Naive thymus-derived CD4-positive, alpha-beta T cell (primary cell): ENCODE measurements at regions of chr12 and their contacts with region 1.

Region 1: GRCh38 chr12:46585854-46586621 is 213.5 kb upstream of the SLC38A2 start:
- DNase-seq: peak in 7 of 9 donors; percentile 33 to 81 (median 71)
- ATAC-seq: peak; percentile 27
- H3K4me3 ChIP-seq: peak overlapping the region; percentile 46
- H3K4me3 Mint-ChIP-seq: peak overlapping the region; percentile 13 to 82 (median 68)
- H3K27ac ChIP-seq: no peak overlapping the region
- H3K27ac Mint-ChIP-seq: peak overlapping the region; percentile 6 to 95 (median 91)
- H3K4me1 ChIP-seq: peaks cover 5 to 21% of the 10 kb centered on the region in 2 donors
- H3K4me1 Mint-ChIP-seq: peaks cover 29 to 79% (median 74%) of the 10 kb centered on the region in 7 donors
- H3K27me3 ChIP-seq: no peaks in the 10 kb centered on the region
- H3K27me3 Mint-ChIP-seq: no peaks in the 10 kb centered on the region

Region 2: DNA sequence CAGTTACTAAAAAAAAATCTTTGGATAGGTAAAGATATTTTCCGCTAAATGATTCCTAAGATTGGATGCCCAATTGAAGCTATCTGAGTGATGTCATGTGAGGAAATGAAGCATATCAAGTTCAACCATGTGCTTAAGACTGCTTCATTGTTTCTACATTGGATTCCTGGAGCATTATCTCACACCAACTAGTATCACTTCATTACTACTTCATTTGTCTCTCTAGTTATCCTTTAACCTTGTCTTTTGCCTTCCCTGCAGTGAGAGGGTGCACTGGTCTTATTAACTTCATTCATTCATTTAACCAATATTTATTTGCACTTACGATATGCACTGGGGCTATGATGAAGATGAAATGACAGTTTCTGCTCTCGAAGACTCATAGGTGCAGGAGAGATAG is 41.6 kb after region 1 on chr12:
- CTCF ChIA-PET with region 1: no interaction called
- POLR2A ChIA-PET with region 1: no interaction called
- intact Hi-C with region 1: loop called in 1 of 2 experiments (anchors 5 kb)
- DNase-seq: no peak
- ATAC-seq: no peak
- H3K4me3 ChIP-seq: no peak overlapping the region
- H3K4me3 Mint-ChIP-seq: no peak overlapping the region
- H3K27ac ChIP-seq: no peak overlapping the region
- H3K27ac Mint-ChIP-seq: no peak overlapping the region
- H3K4me1 ChIP-seq: no peaks in the 10 kb centered on the region
- H3K4me1 Mint-ChIP-seq: peaks cover 0 to 22% (median 12%) of the 10 kb centered on the region in 7 donors
- H3K27me3 ChIP-seq: no peaks in the 10 kb centered on the region
- H3K27me3 Mint-ChIP-seq: no peaks in the 10 kb centered on the region

Region 3: GRCh38 chr12:46886541-46887041 is 300.6 kb after region 1 on chr12:
- CTCF ChIA-PET with region 1: no interaction called
- POLR2A ChIA-PET with region 1: no interaction called
- intact Hi-C with region 1: no loop called
- DNase-seq: no peak
- ATAC-seq: no peak
- H3K4me3 ChIP-seq: no peak overlapping the region
- H3K4me3 Mint-ChIP-seq: no peak overlapping the region
- H3K27ac ChIP-seq: no peak overlapping the region
- H3K27ac Mint-ChIP-seq: no peak overlapping the region
- H3K4me1 ChIP-seq: no peaks in the 10 kb centered on the region
- H3K4me1 Mint-ChIP-seq: no peaks in the 10 kb centered on the region
- H3K27me3 ChIP-seq: no peaks in the 10 kb centered on the region
- H3K27me3 Mint-ChIP-seq: peaks cover 0 to 12% (median 5%) of the 10 kb centered on the region in 5 donors